ENCODE measurements at regions of chr3 and their contacts with region 1.

Region 1: GRCh38 chr3:105700575-105700974 is 168.2 kb downstream of the CBLB start:
- DNase-seq: no peak
- ATAC-seq: no peak
- H3K4me3 ChIP-seq: no peak overlapping the region
- H3K4me3 Mint-ChIP-seq: peak overlapping the region in 1 of 10 donors; percentile 10
- H3K27ac ChIP-seq: no peak overlapping the region
- H3K27ac Mint-ChIP-seq: peak overlapping the region in 7 of 9 donors; percentile 2 to 80 (median 28)
- H3K4me1 ChIP-seq: peaks cover 0 to 16% of the 10 kb centered on the region in 2 donors
- H3K4me1 Mint-ChIP-seq: peaks cover 9 to 55% (median 42%) of the 10 kb centered on the region in 7 donors
- H3K27me3 ChIP-seq: no peaks in the 10 kb centered on the region
- H3K27me3 Mint-ChIP-seq: no peaks in the 10 kb centered on the region

Region 2: DNA sequence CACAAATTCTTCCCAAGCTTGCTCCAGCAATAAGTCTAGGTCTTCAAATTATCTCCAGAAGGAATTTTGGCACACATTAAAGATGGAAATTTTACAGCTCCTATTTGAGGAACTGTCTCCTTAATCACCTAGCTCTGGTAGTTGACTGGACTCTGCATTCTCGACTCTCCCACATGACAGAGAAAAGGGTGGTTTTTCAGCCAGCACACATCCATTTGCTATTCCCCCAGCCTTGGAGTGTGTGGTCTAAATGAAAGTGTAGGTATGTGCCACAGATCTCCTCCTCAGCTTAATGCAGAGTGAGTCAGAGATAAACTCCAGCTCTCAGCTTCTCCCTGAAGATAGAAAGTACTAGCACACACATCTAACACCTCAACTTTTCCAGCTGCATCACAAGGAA is 396.1 kb before region 1 on chr3:
- CTCF ChIA-PET with region 1: no interaction called
- POLR2A ChIA-PET with region 1: no interaction called
- intact Hi-C with region 1: no loop called
- DNase-seq: no peak
- ATAC-seq: no peak
- H3K4me3 ChIP-seq: no peak overlapping the region
- H3K4me3 Mint-ChIP-seq: no peak overlapping the region
- H3K27ac ChIP-seq: no peak overlapping the region
- H3K27ac Mint-ChIP-seq: no peak overlapping the region
- H3K4me1 ChIP-seq: no peaks in the 10 kb centered on the region
- H3K4me1 Mint-ChIP-seq: no peaks in the 10 kb centered on the region
- H3K27me3 ChIP-seq: no peaks in the 10 kb centered on the region
- H3K27me3 Mint-ChIP-seq: peaks cover 0 to 11% (median 5%) of the 10 kb centered on the region in 5 donors

Region 3: GRCh38 chr3:105715372-105715771 is 14.8 kb after region 1 on chr3:
- CTCF ChIA-PET with region 1: interaction called, 5 read pairs
- POLR2A ChIA-PET with region 1: no interaction called
- intact Hi-C with region 1: loop called in 1 of 2 experiments (anchors 1 kb)
- DNase-seq: no peak
- ATAC-seq: no peak
- H3K4me3 ChIP-seq: no peak overlapping the region
- H3K4me3 Mint-ChIP-seq: no peak overlapping the region
- H3K27ac ChIP-seq: no peak overlapping the region
- H3K27ac Mint-ChIP-seq: no peak overlapping the region
- H3K4me1 ChIP-seq: no peaks in the 10 kb centered on the region
- H3K4me1 Mint-ChIP-seq: peaks cover 0 to 23% (median 9%) of the 10 kb centered on the region in 7 donors
- H3K27me3 ChIP-seq: no peaks in the 10 kb centered on the region
- H3K27me3 Mint-ChIP-seq: no peaks in the 10 kb centered on the region

Measured in naive thymus-derived CD4-positive, alpha-beta T cell (primary cell).